ENCODE measurements at regions of chr14 and their contacts with region 1.

Region 1: DNA sequence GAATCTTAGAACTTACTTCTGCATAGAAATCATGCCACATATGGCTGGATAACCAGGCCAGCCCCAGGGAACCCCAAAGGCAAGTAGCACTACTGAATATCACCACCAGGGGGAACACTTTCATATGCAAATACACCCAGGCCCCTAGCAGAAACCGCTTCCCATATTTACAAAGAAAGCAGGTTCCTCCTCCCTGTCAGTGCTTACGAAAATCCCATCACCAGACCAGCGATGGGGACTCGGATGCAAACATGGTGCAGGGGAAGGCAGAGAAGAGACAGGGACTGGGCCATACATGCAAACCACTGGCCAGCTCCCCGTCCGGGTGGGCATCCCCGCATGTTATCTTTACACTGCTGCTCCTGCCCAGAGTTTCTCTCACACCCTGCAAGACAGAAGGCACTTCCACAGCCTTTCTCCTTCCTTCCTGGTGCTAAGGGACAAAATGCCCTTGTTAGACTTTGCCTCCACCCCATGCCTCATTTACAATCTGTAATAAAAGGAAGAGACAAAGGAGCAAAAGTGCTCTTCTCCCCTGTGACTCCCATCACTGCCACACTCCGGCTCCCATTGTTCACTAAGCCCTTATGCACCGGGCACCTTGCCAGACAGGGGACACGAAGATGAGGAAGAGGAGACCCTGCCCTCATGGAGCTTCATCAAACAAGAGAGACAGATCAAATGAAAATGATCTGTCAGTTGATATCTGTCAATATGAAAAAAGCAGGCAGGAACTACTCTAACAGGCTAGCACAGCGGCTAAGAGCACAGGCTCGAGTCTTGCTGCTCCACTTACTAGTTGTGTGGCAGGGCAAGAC is 62.3 kb downstream of the PTPN21 start:
- DNase-seq: peak; percentile 76 to 87 (median 78)
- ATAC-seq: peak; percentile 92
- H3K4me3 ChIP-seq: no peak overlapping the region
- H3K27ac ChIP-seq: no peak overlapping the region
- H3K4me1 ChIP-seq: no peaks in the 10 kb centered on the region
- H3K27me3 ChIP-seq: no peaks in the 10 kb centered on the region
- CTCF ChIP-seq: peak; percentile 82 to 97 (median 91)
- POLR2A ChIP-seq: no peak

Region 2: DNA sequence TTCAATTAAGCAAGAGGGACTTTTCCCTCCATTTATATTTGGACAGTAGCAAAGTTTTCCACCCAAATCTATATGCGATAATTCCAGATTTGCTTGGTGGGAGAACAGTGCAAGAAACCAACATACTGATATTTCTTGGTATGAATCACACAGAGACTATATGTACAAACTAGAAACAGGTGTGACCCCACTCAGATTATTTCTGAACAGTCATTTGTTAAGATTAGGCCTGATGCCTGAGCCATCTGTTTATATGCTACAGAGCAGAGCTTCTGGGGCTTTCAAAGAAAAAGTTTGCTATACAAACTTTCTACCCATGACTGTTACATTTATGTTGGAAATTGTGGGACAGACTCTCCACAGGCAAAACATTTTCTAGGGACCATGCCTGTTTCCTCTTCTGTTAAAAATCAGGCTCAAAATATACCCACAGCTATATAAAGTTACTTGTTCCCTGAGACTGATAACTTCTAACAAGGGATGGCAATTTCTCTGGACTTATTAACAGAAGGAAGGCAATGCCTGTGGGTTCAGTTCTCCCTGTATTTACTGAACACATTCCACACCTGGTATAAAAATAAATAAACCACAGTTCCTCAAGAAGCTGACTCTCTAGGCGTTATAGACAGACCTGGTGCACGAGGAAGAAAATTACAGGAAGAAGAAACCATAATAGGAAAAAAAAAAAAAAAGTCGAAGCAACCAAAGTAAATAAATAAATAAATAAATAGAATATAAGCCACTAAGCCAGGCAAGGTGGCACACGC is 54.3 kb after region 1 on chr14:
- intact Hi-C with region 1: loop called (anchors 5 kb)
- DNase-seq: no peak
- ATAC-seq: no peak
- H3K4me3 ChIP-seq: no peak overlapping the region
- H3K27ac ChIP-seq: peak overlapping the region in 2 of 4 donors; percentile 30 to 44
- H3K4me1 ChIP-seq: peaks cover 39% of the 10 kb centered on the region
- H3K27me3 ChIP-seq: no peaks in the 10 kb centered on the region
- CTCF ChIP-seq: no peak
- POLR2A ChIP-seq: no peak

Region 3: DNA sequence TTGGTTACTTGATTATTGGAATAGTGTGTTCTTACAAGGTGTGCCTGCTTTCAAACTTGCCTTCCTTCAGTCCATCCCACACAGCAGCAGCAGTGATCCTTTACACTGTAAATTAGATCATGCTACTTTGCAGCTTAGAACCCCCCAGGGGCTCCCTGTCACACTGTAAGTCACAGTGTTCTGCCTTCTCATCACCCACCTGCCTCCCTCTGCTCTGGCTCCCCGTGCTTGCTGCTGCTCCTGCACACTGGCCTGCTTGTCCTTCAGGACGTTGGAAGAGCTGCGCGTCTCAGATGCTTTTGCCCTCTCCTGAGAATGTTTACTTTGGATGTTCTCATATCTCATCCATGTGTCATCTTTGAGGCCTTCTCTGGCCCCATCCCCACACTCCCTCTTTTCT is 97.7 kb after region 1 on chr14:
- intact Hi-C with region 1: no loop called
- DNase-seq: no peak
- ATAC-seq: no peak
- H3K4me3 ChIP-seq: no peak overlapping the region
- H3K27ac ChIP-seq: no peak overlapping the region
- H3K4me1 ChIP-seq: peaks cover 16% of the 10 kb centered on the region
- H3K27me3 ChIP-seq: no peaks in the 10 kb centered on the region
- CTCF ChIP-seq: no peak
- POLR2A ChIP-seq: no peak

Measured in body of pancreas (tissue), 4 donors.